K562 (cell line): ENCODE measurements at regions of chr2 and their contacts with region 1.

Region 1: GRCh38 chr2:24287171-24287570 is 73.2 kb downstream of the ITSN2 start:
- DNase-seq: no peak
- ATAC-seq: no peak
- H3K4me3 ChIP-seq: no peak overlapping the region
- H3K27ac ChIP-seq: no peak overlapping the region
- H3K4me1 ChIP-seq: no peaks in the 10 kb centered on the region
- H3K27me3 ChIP-seq: no peaks in the 10 kb centered on the region
- CTCF ChIP-seq: no peak
- EP300 ChIP-seq: no peak
- POLR2A ChIP-seq: no peak
- RAD21 ChIP-seq: no peak

Region 2: DNA sequence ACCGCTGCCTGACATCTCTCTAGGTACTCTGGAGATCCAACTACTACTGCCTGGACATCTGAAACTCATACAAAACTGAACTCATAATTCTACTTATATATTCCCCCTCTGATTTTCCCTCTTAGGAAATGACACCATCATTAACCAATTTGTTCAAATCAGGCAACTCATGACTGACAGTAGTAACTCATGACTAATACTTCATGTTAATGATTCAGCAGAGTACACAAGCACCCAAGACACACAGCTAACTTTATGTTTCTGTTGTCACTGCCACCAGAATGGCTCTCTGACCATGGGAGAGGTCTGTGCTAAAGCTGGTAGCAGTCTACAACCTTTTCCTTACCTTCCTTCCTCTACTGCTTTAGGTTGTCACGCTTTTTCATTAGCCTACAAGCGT is 17.9 kb before region 1 on chr2:
- CTCF ChIA-PET with region 1: interaction called, 10 read pairs
- POLR2A ChIA-PET with region 1: no interaction called
- in situ Hi-C with region 1: no loop called
- intact Hi-C with region 1: no loop called
- DNase-seq: no peak
- ATAC-seq: no peak
- H3K4me3 ChIP-seq: no peak overlapping the region
- H3K27ac ChIP-seq: no peak overlapping the region
- H3K4me1 ChIP-seq: no peaks in the 10 kb centered on the region
- H3K27me3 ChIP-seq: no peaks in the 10 kb centered on the region
- CTCF ChIP-seq: no peak
- EP300 ChIP-seq: no peak
- POLR2A ChIP-seq: no peak
- RAD21 ChIP-seq: no peak